AG04449 (cell line): ENCODE measurements at regions of chr17 and their contacts with region 1.

Region 1: DNA sequence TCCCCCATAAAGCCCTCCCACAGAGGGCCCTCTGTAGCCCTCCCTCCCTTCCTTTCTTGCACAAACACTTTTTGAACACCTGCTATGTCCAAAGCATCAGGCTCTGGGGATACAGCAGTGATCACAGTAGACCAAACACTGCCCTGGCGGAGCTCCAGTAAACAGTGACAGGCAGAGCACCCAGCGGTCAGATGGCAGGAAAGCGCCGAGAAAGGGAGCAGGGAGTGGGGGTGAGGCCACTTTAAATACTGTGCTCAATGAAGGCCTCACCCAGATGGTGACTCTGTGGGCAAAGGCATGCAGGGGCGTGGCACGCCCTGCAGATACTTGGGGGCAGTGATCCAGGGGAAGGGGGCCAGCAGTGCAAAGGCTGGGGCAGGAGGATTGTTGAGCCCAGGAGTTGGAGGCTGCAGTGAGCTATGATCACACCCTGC is 7.6 kb downstream of the PRR29 start:
- DNase-seq: no peak
- H3K4me3 ChIP-seq: no peak overlapping the region
- CTCF ChIP-seq: no peak

Region 2: GRCh38 chr17:63984651-63985386 is 20.9 kb before region 1 on chr17:
- CTCF ChIA-PET with region 1: no interaction called
- POLR2A ChIA-PET with region 1: no interaction called
- DNase-seq: peak; percentile 77
- H3K4me3 ChIP-seq: no peak overlapping the region
- CTCF ChIP-seq: no peak

Region 3: GRCh38 chr17:64020056-64020766 is 14.5 kb after region 1 on chr17 and contains the start of gene ICAM2:
- CTCF ChIA-PET with region 1: interaction called, 39 read pairs
- POLR2A ChIA-PET with region 1: interaction called, 3 read pairs
- DNase-seq: no peak
- H3K4me3 ChIP-seq: peak within 1 kb of the TSS; percentile 20; the same call in 1 of the 2 replicates
- CTCF ChIP-seq: no peak